Natural killer cell (primary cell): ENCODE measurements at regions of chr16 and their contacts with region 1.

Region 1: GRCh38 chr16:4506450-4506849 is 30.3 kb downstream of the HMOX2 start:
- DNase-seq: peak; percentile 45 to 87
- ATAC-seq: peak; percentile 69 to 81 (median 78)
- H3K4me3 ChIP-seq: no peak overlapping the region
- H3K4me3 Mint-ChIP-seq: peak overlapping the region; percentile 90
- H3K27ac ChIP-seq: peak overlapping the region; percentile 84
- H3K27ac Mint-ChIP-seq: peak overlapping the region; percentile 93 to 95
- H3K4me1 ChIP-seq: peaks cover 77% of the 10 kb centered on the region
- H3K4me1 Mint-ChIP-seq: peaks cover 59 to 70% of the 10 kb centered on the region in 2 donors
- H3K27me3 ChIP-seq: no peaks in the 10 kb centered on the region
- H3K27me3 Mint-ChIP-seq: no peaks in the 10 kb centered on the region
- CTCF ChIP-seq: peak; percentile 91

Region 2: GRCh38 chr16:4487955-4488498 is 18.4 kb before region 1 on chr16:
- intact Hi-C with region 1: loop called (anchors 2 kb)
- DNase-seq: peak in 1 of 2 donors; percentile 58
- ATAC-seq: peak; percentile 40 to 41 (median 40)
- H3K4me3 ChIP-seq: no peak overlapping the region
- H3K4me3 Mint-ChIP-seq: peak overlapping the region; percentile 83
- H3K27ac ChIP-seq: peak overlapping the region; percentile 77
- H3K27ac Mint-ChIP-seq: peak overlapping the region; percentile 92 to 94
- H3K4me1 ChIP-seq: peaks cover 34% of the 10 kb centered on the region
- H3K4me1 Mint-ChIP-seq: peaks cover 44 to 46% of the 10 kb centered on the region in 2 donors
- H3K27me3 ChIP-seq: no peaks in the 10 kb centered on the region
- H3K27me3 Mint-ChIP-seq: no peaks in the 10 kb centered on the region
- CTCF ChIP-seq: no peak

Region 3: DNA sequence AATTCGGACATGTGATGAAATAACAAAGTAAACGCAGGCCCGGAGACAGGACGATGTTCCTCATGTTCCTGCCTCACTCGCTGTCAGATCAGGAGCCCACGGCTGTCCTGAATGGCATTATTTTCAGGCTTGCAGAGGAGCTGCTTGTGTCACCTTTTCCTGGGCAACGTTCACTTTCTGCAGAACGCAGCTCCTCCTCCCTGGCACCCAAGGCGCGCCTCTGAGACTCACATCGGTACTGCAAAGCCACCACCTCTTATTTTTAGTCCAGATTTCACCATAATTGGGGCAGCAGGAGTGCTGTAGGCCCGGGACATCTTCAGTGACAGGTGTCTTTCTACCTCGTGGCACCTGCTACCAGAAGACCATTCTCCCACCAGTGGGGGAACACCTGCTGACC is 41.7 kb after region 1 on chr16:
- intact Hi-C with region 1: loop called (anchors 1 kb)
- DNase-seq: no peak
- ATAC-seq: no peak
- H3K4me3 ChIP-seq: no peak overlapping the region
- H3K4me3 Mint-ChIP-seq: no peak overlapping the region
- H3K27ac ChIP-seq: no peak overlapping the region
- H3K27ac Mint-ChIP-seq: no peak overlapping the region
- H3K4me1 ChIP-seq: peaks cover 8% of the 10 kb centered on the region
- H3K4me1 Mint-ChIP-seq: peaks cover 0 to 4% of the 10 kb centered on the region in 2 donors
- H3K27me3 ChIP-seq: no peaks in the 10 kb centered on the region
- H3K27me3 Mint-ChIP-seq: no peaks in the 10 kb centered on the region
- CTCF ChIP-seq: no peak

Region 4: GRCh38 chr16:4580245-4580644 is 73.8 kb after region 1 on chr16:
- intact Hi-C with region 1: loop called (anchors 1 kb)
- DNase-seq: no peak
- ATAC-seq: no peak
- H3K4me3 ChIP-seq: no peak overlapping the region
- H3K4me3 Mint-ChIP-seq: no peak overlapping the region
- H3K27ac ChIP-seq: no peak overlapping the region
- H3K27ac Mint-ChIP-seq: no peak overlapping the region
- H3K4me1 ChIP-seq: peaks cover 3% of the 10 kb centered on the region
- H3K4me1 Mint-ChIP-seq: no peaks in the 10 kb centered on the region
- H3K27me3 ChIP-seq: no peaks in the 10 kb centered on the region
- H3K27me3 Mint-ChIP-seq: no peaks in the 10 kb centered on the region
- CTCF ChIP-seq: no peak